CD4-positive, alpha-beta T cell (primary cell): ENCODE measurements at regions of chr3 and their contacts with region 1.

Region 1: GRCh38 chr3:133494469-133494868 is 79.0 kb upstream of the CDV3 start:
- DNase-seq: peak in 2 of 14 experiments; percentile 12 to 22
- ATAC-seq: no peak
- H3K4me3 ChIP-seq: no peak overlapping the region
- H3K4me3 Mint-ChIP-seq: no peak overlapping the region
- H3K27ac ChIP-seq: no peak overlapping the region
- H3K27ac Mint-ChIP-seq: peak overlapping the region; percentile 63
- H3K4me1 ChIP-seq: peaks cover 45% of the 10 kb centered on the region
- H3K4me1 Mint-ChIP-seq: peaks cover 63% of the 10 kb centered on the region
- H3K27me3 ChIP-seq: no peaks in the 10 kb centered on the region
- H3K27me3 Mint-ChIP-seq: no peaks in the 10 kb centered on the region
- CTCF ChIP-seq: no peak

Region 2: DNA sequence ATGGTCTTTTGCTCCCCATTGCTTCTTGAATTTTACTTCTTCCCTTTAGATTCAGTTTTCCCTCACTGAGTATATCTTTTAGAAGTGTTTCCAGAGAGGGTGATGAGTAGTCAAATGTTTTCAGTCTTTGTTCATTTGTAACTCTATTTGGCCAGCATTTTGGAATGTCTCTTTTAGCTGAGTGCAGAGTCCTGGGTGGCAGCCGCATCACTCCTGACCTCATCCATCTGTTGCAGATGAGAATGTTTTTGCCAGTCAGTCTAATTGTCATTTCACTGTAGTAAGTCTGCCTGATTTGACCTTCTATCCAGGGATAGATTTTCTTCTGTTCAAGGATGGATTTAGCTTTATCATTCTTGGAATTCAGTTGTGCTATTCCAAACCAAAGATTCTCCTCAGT is 318.4 kb after region 1 on chr3:
- CTCF ChIA-PET with region 1: no interaction called
- POLR2A ChIA-PET with region 1: no interaction called
- intact Hi-C with region 1: loop called (anchors 10 kb)
- DNase-seq: no peak
- ATAC-seq: no peak
- H3K4me3 ChIP-seq: no peak overlapping the region
- H3K4me3 Mint-ChIP-seq: no peak overlapping the region
- H3K27ac ChIP-seq: no peak overlapping the region
- H3K27ac Mint-ChIP-seq: no peak overlapping the region
- H3K4me1 ChIP-seq: no peaks in the 10 kb centered on the region
- H3K4me1 Mint-ChIP-seq: peaks cover 39% of the 10 kb centered on the region
- H3K27me3 ChIP-seq: no peaks in the 10 kb centered on the region
- H3K27me3 Mint-ChIP-seq: no peaks in the 10 kb centered on the region
- CTCF ChIP-seq: no peak